ENCODE measurements at regions of chr14 and their contacts with region 1.

Region 1: DNA sequence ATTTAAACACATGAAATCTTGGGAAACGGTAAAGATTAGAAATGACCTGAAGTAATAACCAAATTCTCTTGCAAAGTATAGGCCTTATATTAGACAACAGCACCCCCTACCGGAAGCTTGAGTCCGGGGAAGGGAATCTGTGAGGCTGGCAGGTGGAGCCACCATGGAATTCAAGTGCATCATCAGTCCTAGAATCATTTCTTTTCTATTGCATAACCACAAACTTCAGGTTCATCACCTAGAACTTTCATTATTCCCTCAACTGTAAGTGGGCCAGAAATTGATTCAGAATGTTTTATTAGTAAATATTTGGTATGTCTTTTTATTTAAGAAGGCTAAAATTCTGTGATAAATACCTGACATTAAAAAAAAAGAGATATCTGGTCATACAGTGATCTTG is 48.5 kb downstream of the AP5M1 start:
- DNase-seq: peak; percentile 83
- ATAC-seq: peak; percentile 49
- H3K4me3 Mint-ChIP-seq: no peak overlapping the region
- H3K27ac Mint-ChIP-seq: no peak overlapping the region
- H3K4me1 Mint-ChIP-seq: peaks cover 6% of the 10 kb centered on the region
- H3K27me3 Mint-ChIP-seq: no peaks in the 10 kb centered on the region

Region 2: GRCh38 chr14:56555921-56556570 is 761.3 kb before region 1 on chr14:
- CTCF ChIA-PET with region 1: no interaction called
- POLR2A ChIA-PET with region 1: no interaction called
- intact Hi-C with region 1: loop called in 1 of 2 experiments (anchors 5 kb)
- DNase-seq: no peak
- ATAC-seq: no peak
- H3K4me3 Mint-ChIP-seq: no peak overlapping the region
- H3K27ac Mint-ChIP-seq: no peak overlapping the region
- H3K4me1 Mint-ChIP-seq: no peaks in the 10 kb centered on the region
- H3K27me3 Mint-ChIP-seq: peaks cover 17% of the 10 kb centered on the region

Region 3: DNA sequence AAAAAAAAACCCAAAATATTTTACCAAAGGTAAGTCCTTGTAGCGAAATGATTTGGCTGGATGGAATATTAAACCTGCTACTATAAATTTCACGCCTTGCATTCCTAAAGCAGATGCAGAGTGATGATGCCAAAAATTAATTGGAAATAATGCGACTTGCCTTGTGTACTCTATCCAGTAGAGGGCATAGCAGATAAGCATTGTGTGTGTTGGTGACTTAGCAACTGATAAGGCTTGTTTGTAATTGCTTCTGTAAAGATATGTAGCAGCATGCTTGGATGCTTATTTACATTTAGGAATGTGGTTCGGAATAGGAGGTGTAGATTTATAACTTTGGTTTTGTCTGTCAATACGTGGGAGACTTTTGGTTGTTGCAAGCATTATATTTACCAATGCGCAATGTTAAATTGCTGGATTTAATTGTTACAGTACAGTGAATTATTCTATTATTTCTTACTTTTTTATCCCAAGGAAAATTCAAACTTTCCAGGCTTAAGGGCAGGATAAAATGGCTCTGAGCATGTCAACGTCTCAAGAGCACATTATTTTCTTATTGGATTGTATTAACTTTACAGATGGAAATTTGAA is 657.3 kb before region 1 on chr14:
- CTCF ChIA-PET with region 1: no interaction called
- POLR2A ChIA-PET with region 1: no interaction called
- intact Hi-C with region 1: loop called in 1 of 2 experiments (anchors 5 kb)
- DNase-seq: no peak
- ATAC-seq: no peak
- H3K4me3 Mint-ChIP-seq: no peak overlapping the region
- H3K27ac Mint-ChIP-seq: no peak overlapping the region
- H3K4me1 Mint-ChIP-seq: no peaks in the 10 kb centered on the region
- H3K27me3 Mint-ChIP-seq: peaks cover 2% of the 10 kb centered on the region

Region 4: GRCh38 chr14:57060276-57060955 is 256.9 kb before region 1 on chr14:
- CTCF ChIA-PET with region 1: no interaction called
- POLR2A ChIA-PET with region 1: no interaction called
- intact Hi-C with region 1: loop called (anchors 5 kb)
- DNase-seq: peak; percentile 62
- ATAC-seq: peak; percentile 94
- H3K4me3 Mint-ChIP-seq: no peak overlapping the region
- H3K27ac Mint-ChIP-seq: peak overlapping the region; percentile 35
- H3K4me1 Mint-ChIP-seq: peaks cover 23% of the 10 kb centered on the region
- H3K27me3 Mint-ChIP-seq: peaks cover 12% of the 10 kb centered on the region